ENCODE measurements at regions of chr2 and their contacts with region 1.

Region 1: DNA sequence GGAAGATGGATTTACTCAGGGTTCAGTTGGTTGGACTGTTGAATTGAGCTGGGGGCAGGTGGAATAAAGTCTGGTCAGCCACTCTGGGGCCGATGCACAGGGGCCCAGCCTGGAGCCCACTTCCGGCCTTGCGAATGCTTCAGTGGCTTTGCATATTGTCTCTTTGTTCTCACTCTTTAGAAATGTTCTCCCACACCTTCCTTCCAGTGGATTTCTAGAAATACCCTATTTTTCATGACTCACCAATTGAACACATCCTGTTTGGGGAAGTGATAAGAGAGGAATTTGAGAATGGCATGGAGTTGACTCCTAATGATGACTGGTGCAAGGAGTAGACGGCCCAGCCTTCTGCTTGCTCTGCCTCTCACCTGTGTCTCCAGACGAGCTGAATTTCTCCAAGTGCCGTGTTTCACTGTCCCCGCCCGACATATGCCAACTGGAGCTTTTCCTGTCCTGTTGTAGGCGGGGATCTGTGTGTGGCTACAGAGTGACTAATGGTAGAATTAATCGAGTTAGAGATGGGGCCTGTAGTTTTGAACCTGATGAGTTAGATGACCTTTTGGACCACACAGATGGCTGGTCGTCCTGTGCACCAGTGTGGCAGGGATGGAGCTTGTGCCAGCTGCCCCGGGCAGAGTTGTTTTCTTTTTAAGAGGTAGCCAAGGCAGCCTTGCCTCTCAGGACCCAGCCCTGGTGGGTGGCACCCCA is 28.2 kb downstream of the ASAP2 start:
- DNase-seq: peak; percentile 96
- ATAC-seq: peak; percentile 65
- H3K4me3 ChIP-seq: peak overlapping the region; percentile 40 to 66 (median 49); a peak in 5 of 6 replicates
- H3K27ac ChIP-seq: peak overlapping the region; percentile 84
- H3K4me1 ChIP-seq: peaks cover 88% of the 10 kb centered on the region
- H3K27me3 ChIP-seq: no peaks in the 10 kb centered on the region
- CTCF ChIP-seq: no peak
- EP300 ChIP-seq: peak in 1 of 2 experiments; percentile 82; a peak in 2 of 4 replicates
- POLR2A ChIP-seq: peak in 1 of 2 experiments; percentile 11; a peak in 1 of 4 replicates
- RAD21 ChIP-seq: no peak

Region 2: DNA sequence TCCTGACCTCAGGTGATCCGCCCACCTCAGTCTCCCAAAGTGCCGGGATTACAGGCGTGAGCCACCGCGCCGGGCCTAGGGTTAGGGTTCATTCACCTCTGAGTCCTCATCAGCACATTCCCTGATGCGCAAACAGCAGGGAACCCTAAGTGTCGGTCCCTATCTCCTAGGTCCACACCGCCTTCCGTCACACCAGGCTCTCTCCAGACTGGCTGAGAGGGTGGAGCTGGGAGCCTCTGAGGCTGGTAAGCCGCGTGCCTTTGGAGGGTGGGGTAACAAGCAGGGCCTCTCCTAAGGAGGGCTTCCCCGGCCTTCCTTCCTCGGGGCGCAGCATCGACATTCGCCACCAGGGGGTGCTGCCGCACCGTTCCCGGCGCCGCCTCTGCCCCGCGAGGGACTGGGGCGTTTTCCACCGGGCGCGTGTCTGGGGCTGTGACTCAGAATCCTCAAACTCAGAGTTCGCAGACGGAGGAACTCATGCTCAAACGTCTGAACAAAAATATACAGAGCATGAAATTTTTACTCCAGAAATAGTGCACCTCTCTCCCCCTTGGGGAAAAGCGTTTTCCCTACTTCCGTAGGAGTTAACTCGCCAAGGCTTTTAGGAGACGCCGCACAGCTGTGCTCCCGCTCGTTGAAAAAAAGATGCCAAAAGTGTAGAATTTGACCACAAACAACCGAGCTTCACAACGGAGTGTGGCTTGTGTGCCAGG is 92.1 kb before region 1 on chr2:
- CTCF ChIA-PET with region 1: no interaction called
- POLR2A ChIA-PET with region 1: interaction called, 12 read pairs
- in situ Hi-C with region 1: no loop called
- intact Hi-C with region 1: no loop called
- DNase-seq: peak; percentile 55
- ATAC-seq: peak; percentile 88
- H3K4me3 ChIP-seq: peak overlapping the region; percentile 57 to 73 (median 61)
- H3K27ac ChIP-seq: no peak overlapping the region
- H3K4me1 ChIP-seq: peaks cover 43% of the 10 kb centered on the region
- H3K27me3 ChIP-seq: peaks cover 3 to 29% of the 10 kb centered on the region in 2 experiments; a peak in 3 of 5 replicates
- CTCF ChIP-seq: peak; percentile 100
- EP300 ChIP-seq: 0 out of 4 replicates have a peak, but pooled peaks of 1 of the 2 experiments have one; percentile 23
- POLR2A ChIP-seq: no peak
- RAD21 ChIP-seq: peak; percentile 99

Region 3: DNA sequence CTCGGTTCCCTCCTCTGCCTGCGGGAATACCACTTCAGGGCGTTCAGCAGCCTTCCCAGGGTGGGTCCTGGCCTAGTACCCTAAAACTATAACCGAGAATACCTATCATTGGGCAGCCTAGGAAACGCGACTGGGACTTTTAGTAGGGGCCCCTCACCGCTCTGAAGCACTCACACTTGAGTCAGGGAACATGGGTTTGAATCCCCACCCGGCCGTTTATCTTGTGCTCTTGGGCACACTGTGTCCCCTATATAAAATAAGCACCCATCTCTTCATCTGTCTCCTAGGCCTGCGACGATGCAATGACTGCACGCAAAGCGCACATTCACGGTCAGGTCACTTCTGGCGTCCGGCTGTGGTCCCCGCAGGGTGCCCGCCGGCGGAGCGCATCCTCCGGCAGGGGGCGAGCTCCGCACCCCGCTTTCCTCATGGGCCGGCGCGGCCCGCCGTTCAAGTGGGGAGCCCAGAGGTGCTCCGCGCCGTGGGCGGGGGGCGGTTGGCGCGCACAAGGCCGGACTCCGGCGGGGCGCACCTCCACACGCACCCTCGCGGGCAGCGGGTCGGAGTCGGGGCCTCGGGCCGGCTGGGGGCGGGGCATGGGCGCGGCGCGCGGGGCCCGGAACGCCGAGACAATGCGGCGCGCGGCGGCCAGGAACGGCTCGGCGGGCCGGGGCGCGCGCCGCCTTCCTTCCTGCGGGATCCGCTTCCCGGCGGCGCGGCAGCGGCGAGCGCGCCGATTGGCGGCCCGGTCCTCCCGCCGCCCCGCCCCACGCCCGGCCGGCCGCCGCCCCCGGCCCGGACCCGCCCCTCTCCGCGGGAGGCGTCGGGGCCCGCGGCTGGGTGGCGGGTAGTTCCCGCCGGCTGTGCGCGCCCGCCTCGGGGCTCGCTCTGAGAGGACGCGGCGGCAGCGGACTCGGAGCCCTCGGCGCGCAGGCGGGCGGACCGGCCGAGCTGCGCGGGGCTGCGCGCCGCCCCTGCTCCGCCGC is 28.6 kb before region 1 on chr2 and contains the start of gene ASAP2:
- CTCF ChIA-PET with region 1: no interaction called
- POLR2A ChIA-PET with region 1: interaction called, 92 read pairs
- in situ Hi-C with region 1: no loop called
- intact Hi-C with region 1: loop called (anchors 1 kb)
- DNase-seq: peak; percentile 59
- ATAC-seq: peak; percentile 79
- H3K4me3 ChIP-seq: peak within 1 kb of the TSS; percentile 87 to 96 (median 90)
- H3K27ac ChIP-seq: peak within 1 kb of the TSS; percentile 1
- H3K4me1 ChIP-seq: peaks cover 62% of the 10 kb centered on the region
- H3K27me3 ChIP-seq: no peaks in the 10 kb centered on the region; a peak in 1 of 5 replicates
- CTCF ChIP-seq: peak; percentile 89
- EP300 ChIP-seq: no peak
- POLR2A ChIP-seq: peak in 1 of 2 experiments; percentile 31; a peak in 1 of 4 replicates
- RAD21 ChIP-seq: peak; percentile 96
- total RNA-seq, gene ASAP2: 7.3 and 7.5 TPM in 2 replicates

Region 4: DNA sequence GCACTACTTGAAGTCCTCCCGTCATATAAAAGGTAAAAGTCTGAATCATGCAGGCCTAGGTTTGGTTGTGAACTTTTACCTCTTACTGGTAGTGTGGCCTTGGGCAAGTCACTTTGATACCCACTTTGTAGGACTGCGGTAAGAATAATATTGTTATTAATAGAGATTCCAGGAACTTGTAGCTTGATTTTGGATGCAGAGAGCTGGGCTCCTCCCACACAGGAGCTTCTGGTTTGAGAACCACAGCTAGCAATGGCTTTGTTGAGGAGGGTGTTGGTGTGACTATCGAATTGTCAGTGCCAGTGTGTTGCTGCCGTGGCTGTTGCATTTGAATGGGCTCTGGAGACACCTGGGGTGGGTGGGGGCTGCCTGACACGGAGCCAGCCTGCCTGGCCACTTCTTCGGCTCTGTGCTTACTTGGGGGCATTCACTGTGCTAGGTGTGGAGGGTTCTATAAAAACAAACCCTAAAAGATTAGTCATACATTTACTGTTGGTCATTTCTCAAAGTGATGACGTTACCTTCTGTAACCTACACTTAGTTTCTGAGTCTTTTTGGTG is 10.2 kb after region 1 on chr2:
- CTCF ChIA-PET with region 1: no interaction called
- POLR2A ChIA-PET with region 1: interaction called, 28 read pairs
- in situ Hi-C with region 1: no loop called
- intact Hi-C with region 1: no loop called
- DNase-seq: no peak
- ATAC-seq: no peak
- H3K4me3 ChIP-seq: no peak overlapping the region
- H3K27ac ChIP-seq: no peak overlapping the region
- H3K4me1 ChIP-seq: peaks cover 76% of the 10 kb centered on the region
- H3K27me3 ChIP-seq: no peaks in the 10 kb centered on the region
- CTCF ChIP-seq: no peak
- EP300 ChIP-seq: no peak
- POLR2A ChIP-seq: no peak
- RAD21 ChIP-seq: no peak

Region 5: GRCh38 chr2:9326975-9327374 is 92.1 kb after region 1 on chr2:
- CTCF ChIA-PET with region 1: no interaction called
- POLR2A ChIA-PET with region 1: interaction called, 16 read pairs
- in situ Hi-C with region 1: no loop called
- intact Hi-C with region 1: no loop called
- DNase-seq: peak; percentile 37
- ATAC-seq: no peak
- H3K4me3 ChIP-seq: no peak overlapping the region
- H3K27ac ChIP-seq: peak overlapping the region; percentile 31
- H3K4me1 ChIP-seq: peaks cover 33% of the 10 kb centered on the region
- H3K27me3 ChIP-seq: no peaks in the 10 kb centered on the region
- CTCF ChIP-seq: no peak
- EP300 ChIP-seq: 0 out of 4 replicates have a peak, but pooled peaks of 1 of the 2 experiments have one; percentile 30
- POLR2A ChIP-seq: no peak
- RAD21 ChIP-seq: no peak

Region 6: GRCh38 chr2:9423100-9423921 is 188.5 kb after region 1 on chr2 and contains the starts of genes CPSF3 and ITGB1BP1:
- CTCF ChIA-PET with region 1: no interaction called
- POLR2A ChIA-PET with region 1: interaction called, 15 read pairs
- in situ Hi-C with region 1: no loop called
- intact Hi-C with region 1: no loop called
- DNase-seq: peak; percentile 98
- ATAC-seq: peak; percentile 87
- H3K4me3 ChIP-seq: peak within 1 kb of the TSS; percentile 80 to 97 (median 86)
- H3K27ac ChIP-seq: peak within 1 kb of the TSS; percentile 75
- H3K4me1 ChIP-seq: peaks cover 57% of the 10 kb centered on the region
- H3K27me3 ChIP-seq: no peaks in the 10 kb centered on the region; a peak in 1 of 5 replicates
- CTCF ChIP-seq: peak; percentile 45; the same call in 1 of the 2 replicates
- EP300 ChIP-seq: 0 out of 4 replicates have a peak, but pooled peaks of 1 of the 2 experiments have one; percentile 5
- POLR2A ChIP-seq: peak; percentile 54 to 75; a peak in 3 of 4 replicates
- RAD21 ChIP-seq: peak; percentile 73
- total RNA-seq, gene CPSF3: 93.0 and 128 TPM in 2 replicates
- total RNA-seq, gene ITGB1BP1: 108 and 125 TPM in 2 replicates